Activated CD8-positive, alpha-beta T cell treated with anti-CD3 and anti-CD28 coated beads, Interleukin-2, amount 10 ng/mL, durations not matched to agents 7 days and 5 days (primary cell): ENCODE measurements at regions of chr15 and their contacts with region 1.

Region 1: DNA sequence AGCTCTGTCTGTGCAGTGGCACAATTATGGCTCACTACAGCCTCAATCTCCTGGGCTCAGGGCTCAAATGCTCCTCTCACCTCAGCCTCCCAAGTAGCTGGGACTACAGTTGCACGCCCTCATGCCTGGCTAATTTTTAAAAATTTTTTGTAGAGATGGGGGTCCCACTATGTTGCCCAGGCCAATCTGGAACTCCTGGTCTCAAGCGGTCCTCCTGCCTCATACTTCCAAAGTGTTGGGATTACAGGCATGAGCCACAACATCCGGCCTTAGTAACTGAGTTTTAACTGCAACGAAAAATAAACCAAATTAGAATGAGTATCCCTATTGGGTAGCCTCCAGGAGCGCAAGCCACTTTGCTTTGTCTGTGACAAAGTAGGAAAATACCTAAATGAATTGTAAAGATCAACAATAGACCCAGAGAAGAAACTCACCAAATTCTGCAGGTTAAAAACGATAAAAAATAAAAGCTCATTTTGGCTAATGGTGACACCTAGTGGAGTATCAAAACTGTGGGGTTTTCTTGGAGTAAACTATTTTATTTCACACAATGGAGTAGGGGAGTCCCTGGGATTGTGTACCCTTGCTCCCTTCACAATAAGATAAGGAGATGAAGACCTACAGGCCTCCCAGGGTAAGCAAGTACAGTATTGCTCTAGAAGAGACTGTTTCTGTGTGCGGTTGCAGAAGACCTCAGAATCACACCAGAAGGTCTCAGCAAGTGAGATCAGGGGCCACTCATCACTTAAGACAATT is 21.0 kb upstream of the CA12 start:
- DNase-seq: peak; percentile 28
- ATAC-seq: peak; percentile 39
- H3K4me3 Mint-ChIP-seq: no peak overlapping the region
- H3K27ac Mint-ChIP-seq: no peak overlapping the region
- H3K4me1 Mint-ChIP-seq: peaks cover 14% of the 10 kb centered on the region
- H3K27me3 Mint-ChIP-seq: peaks cover 2% of the 10 kb centered on the region

Region 2: DNA sequence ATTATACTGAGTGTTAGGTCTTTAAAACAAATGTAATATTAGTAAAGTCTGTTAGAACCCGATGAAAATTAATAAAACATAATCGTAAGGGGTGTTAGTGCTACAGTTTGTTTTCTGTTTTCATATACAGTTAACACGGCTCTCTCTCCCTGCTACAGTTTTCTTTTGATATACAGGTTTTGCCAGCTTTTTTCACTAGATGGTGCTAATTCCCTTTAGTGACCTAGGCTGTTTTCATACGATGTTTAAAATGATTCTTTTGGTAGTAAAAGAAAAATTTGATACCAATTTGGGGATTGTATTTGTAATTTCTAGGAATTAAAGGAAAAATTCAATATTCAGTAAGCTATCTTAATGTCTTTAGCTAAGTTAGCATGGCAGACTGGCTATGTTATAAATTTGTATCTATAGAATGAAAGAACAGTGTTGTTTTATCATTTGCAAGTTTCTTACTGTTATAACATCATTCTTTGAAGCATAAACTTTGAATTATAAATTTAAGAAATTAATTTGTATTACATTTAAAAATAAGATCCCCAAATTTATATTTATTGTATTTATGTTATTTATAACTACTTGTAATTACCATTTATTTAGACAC is 113.8 kb before region 1 on chr15:
- CTCF ChIA-PET with region 1: interaction called, 41 read pairs
- POLR2A ChIA-PET with region 1: no interaction called
- DNase-seq: no peak
- ATAC-seq: peak; percentile 68
- H3K4me3 Mint-ChIP-seq: no peak overlapping the region
- H3K27ac Mint-ChIP-seq: no peak overlapping the region
- H3K4me1 Mint-ChIP-seq: peaks cover 8% of the 10 kb centered on the region
- H3K27me3 Mint-ChIP-seq: no peaks in the 10 kb centered on the region

Region 3: GRCh38 chr15:63348392-63348791 is 54.3 kb before region 1 on chr15:
- CTCF ChIA-PET with region 1: no interaction called
- POLR2A ChIA-PET with region 1: no interaction called
- DNase-seq: no peak
- ATAC-seq: no peak
- H3K4me3 Mint-ChIP-seq: no peak overlapping the region
- H3K27ac Mint-ChIP-seq: no peak overlapping the region
- H3K4me1 Mint-ChIP-seq: no peaks in the 10 kb centered on the region
- H3K27me3 Mint-ChIP-seq: peaks cover 6% of the 10 kb centered on the region

Region 4: DNA sequence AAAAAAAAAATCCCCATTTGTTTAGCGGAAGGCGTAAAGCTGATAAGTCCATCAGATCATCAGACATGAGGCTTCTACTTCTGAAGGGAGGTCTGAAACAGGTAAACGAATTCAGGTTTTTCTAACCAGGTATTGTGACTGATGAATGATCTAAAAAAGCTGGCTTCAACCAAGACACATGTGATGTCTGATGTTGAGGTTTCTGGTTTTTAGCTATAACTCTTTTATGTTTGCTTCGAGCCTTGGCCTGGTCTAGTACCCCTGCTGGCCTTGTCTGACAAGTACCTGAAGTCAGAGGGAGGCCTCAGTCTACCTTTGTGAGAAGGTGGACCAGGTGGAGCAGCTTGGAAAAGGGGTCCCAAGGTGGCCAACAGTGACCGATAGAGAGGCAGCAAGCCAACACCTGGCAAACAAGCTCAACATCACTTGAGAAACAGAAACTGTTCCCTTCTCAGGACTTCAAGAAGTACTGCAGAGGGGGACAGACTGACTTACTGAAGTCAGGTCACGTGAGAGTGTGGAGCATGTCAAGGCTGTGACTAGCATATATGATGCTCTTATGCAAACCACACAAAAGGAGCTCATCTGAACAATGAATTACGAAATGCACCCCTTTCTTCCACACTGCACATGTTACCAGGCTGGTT is 11.9 kb after region 1 on chr15:
- CTCF ChIA-PET with region 1: interaction called, 22 read pairs
- POLR2A ChIA-PET with region 1: no interaction called
- DNase-seq: no peak
- ATAC-seq: no peak
- H3K4me3 Mint-ChIP-seq: no peak overlapping the region
- H3K27ac Mint-ChIP-seq: no peak overlapping the region
- H3K4me1 Mint-ChIP-seq: no peaks in the 10 kb centered on the region
- H3K27me3 Mint-ChIP-seq: peaks cover 3% of the 10 kb centered on the region

Region 5: DNA sequence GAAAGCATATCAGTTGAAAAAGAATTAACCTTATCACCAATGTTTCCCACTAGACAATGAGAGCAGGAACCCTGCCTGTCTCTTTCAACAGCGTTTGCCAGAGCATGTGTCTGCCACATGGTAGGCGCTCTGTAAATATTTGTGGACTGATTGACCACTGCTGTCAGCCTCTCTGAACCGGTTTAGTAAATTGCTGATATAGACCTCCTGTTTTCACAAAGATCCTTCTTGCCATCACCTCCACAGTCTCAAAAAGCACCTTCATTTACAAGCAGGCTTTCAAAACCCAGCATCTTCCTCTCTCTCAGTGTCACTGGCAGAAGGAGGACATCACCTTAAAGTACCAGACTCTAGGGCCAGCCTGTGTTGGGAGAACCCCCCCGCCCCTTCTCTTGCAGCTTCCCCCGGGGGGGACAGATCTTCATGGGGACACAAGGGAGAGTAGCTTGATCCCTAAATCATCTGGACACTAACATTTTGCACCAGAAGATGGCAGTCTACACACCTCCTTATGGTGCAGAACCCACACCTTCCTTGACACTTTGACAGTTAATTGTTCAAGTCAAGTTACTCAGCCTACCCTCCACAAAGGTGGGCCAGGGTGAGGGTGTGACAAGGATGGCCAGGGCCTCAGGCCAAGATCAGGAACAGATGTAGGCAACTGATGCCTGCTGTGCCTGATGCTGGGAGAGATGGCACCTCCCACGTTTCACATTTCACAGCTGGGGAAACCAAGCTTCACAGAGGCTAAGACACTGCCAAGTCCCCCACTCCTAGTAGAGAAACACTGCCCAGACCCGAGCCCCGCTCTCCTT is 63.9 kb after region 1 on chr15:
- CTCF ChIA-PET with region 1: no interaction called
- POLR2A ChIA-PET with region 1: no interaction called
- DNase-seq: peak; percentile 77
- ATAC-seq: peak; percentile 93
- H3K4me3 Mint-ChIP-seq: no peak overlapping the region
- H3K27ac Mint-ChIP-seq: no peak overlapping the region
- H3K4me1 Mint-ChIP-seq: peaks cover 9% of the 10 kb centered on the region
- H3K27me3 Mint-ChIP-seq: peaks cover 5% of the 10 kb centered on the region